Right ventricle myocardium inferior (tissue), 1 donor: ENCODE measurements at regions of chr1 and their contacts with region 1.

Region 1: DNA sequence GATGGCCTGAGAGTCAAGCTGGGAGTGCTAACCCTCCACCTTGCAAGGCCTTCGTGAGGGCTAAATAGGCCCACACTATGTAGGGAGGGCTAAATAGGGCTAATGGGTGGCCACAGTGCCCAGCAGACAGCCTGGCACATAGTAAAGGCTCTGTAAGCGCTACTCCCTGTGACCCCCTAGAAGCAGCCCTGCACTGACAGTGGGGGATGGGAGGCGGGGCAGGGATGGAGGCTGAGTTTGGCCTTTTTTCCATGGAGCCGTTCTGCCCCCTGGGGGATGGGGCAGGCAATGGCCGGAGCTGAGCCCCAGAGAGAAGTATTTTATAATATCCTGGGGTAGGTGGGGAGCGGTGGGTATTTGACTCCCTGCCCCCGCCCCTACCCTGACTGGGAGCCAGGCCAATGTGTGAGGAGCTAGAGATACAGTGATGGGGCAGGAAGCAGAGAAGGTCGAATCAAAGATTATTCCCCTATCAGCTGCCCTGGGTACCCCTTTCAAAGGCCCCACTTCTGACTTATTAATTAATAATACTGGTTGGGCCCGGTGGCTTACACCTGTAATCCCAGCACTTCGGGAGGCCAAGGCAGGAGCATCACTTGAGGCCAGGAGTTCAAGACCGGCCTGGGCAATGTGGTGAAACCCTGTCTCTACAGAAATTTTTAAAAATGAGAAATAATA is 42.3 kb downstream of the LACTBL1 start:
- DNase-seq: no peak
- ATAC-seq: peak; percentile 72

Region 2: DNA sequence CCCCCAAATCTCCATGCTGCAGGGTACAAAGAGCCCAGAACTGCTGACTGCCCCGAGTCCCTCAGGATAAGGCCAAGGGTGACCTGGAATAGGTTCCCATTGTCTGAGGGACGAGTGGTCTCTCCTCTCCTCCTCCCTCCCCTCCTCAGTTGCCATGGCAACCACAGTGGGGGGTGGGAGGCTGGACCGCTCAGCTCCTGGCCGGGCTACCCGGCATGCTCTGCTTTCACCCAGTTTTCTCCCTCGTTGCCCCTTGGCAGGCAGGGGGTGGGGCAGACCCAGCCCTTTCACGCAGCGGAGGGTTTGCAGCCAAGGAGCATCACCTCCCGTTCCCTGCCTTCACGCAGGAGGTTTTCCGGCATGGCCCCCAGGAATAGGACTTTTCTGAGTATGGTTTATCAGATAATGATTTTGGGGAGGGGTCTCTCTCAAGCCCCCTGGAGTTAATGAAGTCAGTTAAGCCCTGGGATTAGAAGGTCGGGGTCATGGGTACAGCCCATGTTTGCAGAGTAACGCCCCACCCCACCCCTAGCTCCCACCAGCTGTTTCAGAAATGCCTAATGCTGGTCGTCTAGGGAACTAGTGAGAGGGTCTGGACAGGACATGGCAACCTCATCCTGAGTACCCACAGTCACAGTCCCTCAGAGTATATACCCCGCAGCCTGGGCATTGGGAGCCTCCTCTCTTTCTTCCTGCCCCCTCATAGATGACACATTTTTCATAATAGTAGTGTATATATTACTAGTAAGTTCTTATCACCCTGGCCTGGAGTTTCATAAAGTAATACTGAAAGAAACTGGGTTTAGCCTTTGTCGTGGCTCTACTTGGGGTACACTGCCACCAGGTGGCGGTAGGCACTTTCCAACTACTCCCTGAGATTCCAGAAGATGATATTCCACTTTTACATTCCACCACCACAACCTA is 256.6 kb before region 1 on chr1:
- intact Hi-C with region 1: loop called (anchors 5 kb)
- DNase-seq: no peak
- ATAC-seq: no peak